ENCODE measurements at regions of chr3 and their contacts with region 1.

Region 1: DNA sequence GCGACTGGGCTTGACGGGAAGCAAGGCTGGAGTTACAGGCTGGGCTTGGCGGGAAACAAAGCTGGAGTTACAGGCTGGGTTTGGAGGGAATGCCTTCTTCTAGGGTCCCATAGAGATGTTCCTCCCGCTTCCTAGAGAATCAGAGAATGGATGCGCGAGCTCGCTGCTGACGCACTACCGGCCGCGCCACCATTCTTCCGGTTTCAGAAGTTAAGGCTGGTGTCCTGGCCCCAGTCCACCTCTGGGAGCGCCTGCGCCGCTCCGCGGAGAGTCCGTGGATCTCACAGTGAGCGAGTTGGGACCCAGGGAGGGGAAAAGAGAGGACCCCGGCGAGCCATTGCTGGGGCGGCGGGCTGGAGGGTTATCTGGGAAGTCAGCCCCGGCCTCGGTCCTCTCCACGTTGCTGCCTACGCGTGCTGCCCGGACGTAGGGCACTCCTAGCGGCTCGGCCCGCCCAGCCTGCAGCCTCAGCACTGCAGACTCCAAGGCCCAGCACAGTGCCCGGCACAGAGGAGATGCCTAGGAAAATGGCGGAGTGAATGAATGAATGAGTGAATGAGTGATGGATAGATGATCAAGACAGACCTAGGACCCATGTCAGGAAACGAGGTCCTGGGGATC is at the start of gene ZNF502:
- DNase-seq: peak; percentile 71
- ATAC-seq: peak; percentile 91
- H3K4me3 Mint-ChIP-seq: peak within 1 kb of the TSS; percentile 90
- H3K27ac Mint-ChIP-seq: peak within 1 kb of the TSS; percentile 88
- H3K4me1 Mint-ChIP-seq: peaks cover 14% of the 10 kb centered on the region
- H3K27me3 Mint-ChIP-seq: peaks cover 9% of the 10 kb centered on the region
- total RNA-seq, gene ZNF502: 2.4 to 4.0 TPM

Region 2: DNA sequence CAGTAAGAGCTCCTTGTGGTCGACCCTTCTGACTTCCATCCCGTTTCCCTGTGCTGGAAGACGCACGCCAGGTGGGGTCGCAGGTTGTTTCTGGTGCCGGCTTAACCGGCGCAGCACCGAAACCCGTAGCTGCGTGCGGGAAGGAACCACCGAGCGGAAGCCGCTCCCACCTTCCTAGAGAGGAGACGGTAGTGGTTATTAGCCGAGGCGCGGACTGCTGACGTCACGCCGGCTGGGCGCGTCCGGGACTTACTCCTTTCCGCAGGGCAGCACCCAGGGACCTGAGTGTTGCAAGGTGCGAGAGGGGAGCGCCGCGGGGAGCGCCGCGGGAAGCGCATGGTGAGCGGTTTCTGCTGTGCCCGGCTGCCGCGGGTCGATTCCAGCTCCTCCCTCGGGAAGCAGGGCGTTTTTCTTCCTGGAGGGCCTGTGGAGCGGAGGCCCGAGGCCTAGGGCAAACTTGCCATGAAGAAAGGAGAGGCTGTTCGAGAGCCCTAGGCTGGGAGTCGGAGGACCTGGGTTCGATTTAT is 16.9 kb after region 1 on chr3 and contains the start of gene ZNF501:
- CTCF ChIA-PET with region 1: interaction called, 6 read pairs
- POLR2A ChIA-PET with region 1: interaction called, 13 read pairs
- DNase-seq: peak; percentile 93
- ATAC-seq: peak; percentile 97
- H3K4me3 Mint-ChIP-seq: peak within 1 kb of the TSS; percentile 94
- H3K27ac Mint-ChIP-seq: peak within 1 kb of the TSS; percentile 95
- H3K4me1 Mint-ChIP-seq: peaks cover 14% of the 10 kb centered on the region
- H3K27me3 Mint-ChIP-seq: no peaks in the 10 kb centered on the region
- total RNA-seq, gene ZNF501: 2.9 to 3.6 TPM

Measured in activated CD8-positive, alpha-beta T cell treated with anti-CD3 and anti-CD28 coated beads, Interleukin-2, amount 10 ng/mL, durations not matched to agents 7 days and 5 days (primary cell).